ENCODE measurements at regions of chr1 and their contacts with region 1.

Region 1: DNA sequence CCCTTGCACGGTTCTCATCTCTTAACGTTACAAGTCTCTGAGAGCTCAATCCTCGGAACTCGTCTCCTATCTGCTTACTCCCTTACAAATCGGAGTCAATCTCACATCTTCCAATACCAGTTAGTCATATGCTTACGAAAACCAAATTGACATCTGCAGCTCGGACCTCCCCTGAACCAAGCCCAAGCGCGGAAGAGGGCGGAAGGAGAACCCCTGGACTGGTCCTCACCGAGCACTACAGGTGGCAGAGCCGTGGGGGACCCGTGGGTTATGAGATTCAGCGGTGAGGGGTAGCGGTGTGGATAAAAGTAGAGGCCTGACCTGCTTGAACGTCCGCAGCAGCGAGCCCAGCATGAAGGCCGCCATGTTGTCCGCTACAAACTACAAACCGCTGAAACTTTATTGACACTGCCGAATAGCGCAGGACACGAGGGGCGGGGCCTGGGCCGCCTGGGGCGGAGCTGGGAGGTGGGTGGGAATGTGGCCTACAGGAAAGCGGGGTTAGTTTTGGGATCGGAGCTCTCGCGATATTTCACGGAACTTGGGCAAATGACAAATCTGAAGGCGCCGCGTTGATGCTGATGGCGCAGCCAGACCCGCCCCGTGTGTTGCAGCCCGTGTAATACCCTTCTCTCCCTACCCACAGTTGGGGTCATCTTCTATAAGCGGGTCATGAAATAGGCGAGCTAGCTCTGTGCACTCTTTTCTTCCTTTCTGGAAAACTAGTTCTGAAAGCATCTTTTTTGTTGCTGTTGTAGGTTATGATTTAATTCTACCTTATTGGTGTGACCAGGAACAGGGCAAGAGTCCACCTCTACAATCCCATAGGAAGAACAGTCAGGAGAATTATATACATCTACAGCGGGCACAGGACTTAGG is at the start of gene MRPS14:
- DNase-seq: peak; percentile 99
- H3K4me3 Mint-ChIP-seq: peak within 1 kb of the TSS; percentile 87
- H3K27ac Mint-ChIP-seq: peak within 1 kb of the TSS; percentile 77
- H3K4me1 Mint-ChIP-seq: peaks cover 20% of the 10 kb centered on the region
- H3K27me3 Mint-ChIP-seq: no peaks in the 10 kb centered on the region
- CTCF ChIP-seq: no peak
- total RNA-seq, gene MRPS14: 36.3 and 40.6 TPM in 2 replicates

Region 2: DNA sequence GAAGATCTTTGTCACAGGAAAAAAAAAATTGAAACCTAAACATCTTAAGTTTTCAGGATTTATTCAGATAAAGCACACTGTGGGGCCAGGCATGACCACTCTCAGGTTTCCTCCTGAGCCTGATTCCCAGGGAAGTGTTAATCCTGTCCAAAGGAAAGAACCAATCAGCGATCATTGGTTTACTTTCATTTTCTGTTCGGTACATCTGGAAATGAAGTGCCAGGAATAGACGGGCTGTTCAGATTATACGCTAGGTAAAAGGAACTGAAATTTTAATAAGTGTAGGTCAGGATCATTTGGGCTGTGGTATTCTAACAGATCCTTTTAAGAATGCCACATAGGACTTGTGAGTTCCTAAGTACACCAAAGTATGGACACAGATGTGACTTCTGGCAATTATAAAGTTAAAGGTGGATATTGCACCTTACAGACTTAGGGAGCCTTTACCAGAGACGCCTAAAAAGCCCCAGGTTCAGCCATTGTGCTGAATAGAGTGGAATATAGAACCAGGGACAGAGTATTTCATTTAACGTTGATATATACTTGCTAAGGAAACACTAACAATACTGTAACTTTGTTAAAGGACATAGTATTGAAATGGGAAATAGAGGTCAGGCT is 32.8 kb before region 1 on chr1:
- CTCF ChIA-PET with region 1: no interaction called
- POLR2A ChIA-PET with region 1: interaction called, 13 read pairs
- intact Hi-C with region 1: no loop called
- DNase-seq: peak; percentile 91
- H3K4me3 Mint-ChIP-seq: peak overlapping the region; percentile 89
- H3K27ac Mint-ChIP-seq: peak overlapping the region; percentile 98
- H3K4me1 Mint-ChIP-seq: peaks cover 6% of the 10 kb centered on the region
- H3K27me3 Mint-ChIP-seq: no peaks in the 10 kb centered on the region
- CTCF ChIP-seq: no peak

Region 3: DNA sequence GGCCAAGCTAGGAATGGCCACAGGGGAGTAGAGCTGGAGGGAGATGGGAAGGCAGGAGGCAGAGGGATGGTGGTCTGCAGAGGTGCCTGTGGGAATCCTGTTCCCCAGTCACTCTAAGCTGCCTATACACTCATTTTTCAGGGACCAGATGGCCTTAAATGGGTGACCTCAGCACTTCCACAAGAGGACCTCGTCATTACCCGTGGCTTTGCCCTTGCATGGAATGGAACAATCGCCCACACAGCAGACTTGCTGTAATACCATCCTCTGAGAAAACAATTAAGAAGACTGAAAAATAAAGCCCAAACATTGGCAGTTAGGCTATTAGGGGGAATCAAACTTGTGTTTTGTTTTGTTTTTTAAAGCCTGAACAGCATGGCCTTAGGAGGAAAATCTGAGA is 31.5 kb after region 1 on chr1:
- CTCF ChIA-PET with region 1: interaction called, 24 read pairs
- POLR2A ChIA-PET with region 1: interaction called, 3 read pairs
- intact Hi-C with region 1: no loop called
- DNase-seq: no peak
- H3K4me3 Mint-ChIP-seq: no peak overlapping the region
- H3K27ac Mint-ChIP-seq: no peak overlapping the region
- H3K4me1 Mint-ChIP-seq: no peaks in the 10 kb centered on the region
- H3K27me3 Mint-ChIP-seq: peaks cover 24% of the 10 kb centered on the region
- CTCF ChIP-seq: no peak

Region 4: DNA sequence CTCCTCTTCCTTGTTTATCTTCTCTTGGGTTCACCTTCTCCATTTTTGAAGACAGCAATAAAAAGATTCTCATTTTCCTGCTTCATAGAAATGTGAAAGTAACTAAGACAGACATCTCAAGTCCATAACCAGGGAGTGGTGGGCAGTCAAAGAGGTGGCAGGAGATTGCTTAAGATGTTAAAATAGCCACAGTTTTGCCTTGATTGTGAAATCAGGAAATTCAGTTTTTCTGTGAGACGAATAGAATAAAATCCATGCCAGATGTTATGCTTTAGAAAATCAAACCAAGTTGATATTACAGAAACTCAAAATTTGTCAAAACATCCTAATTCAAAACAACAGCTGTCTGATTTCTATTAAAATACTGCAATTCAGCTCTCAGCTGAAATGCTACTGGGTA is 101.6 kb after region 1 on chr1:
- CTCF ChIA-PET with region 1: interaction called, 232 read pairs
- POLR2A ChIA-PET with region 1: interaction called, 9 read pairs
- intact Hi-C with region 1: no loop called
- DNase-seq: peak; percentile 36
- H3K4me3 Mint-ChIP-seq: no peak overlapping the region
- H3K27ac Mint-ChIP-seq: no peak overlapping the region
- H3K4me1 Mint-ChIP-seq: peaks cover 13% of the 10 kb centered on the region
- H3K27me3 Mint-ChIP-seq: no peaks in the 10 kb centered on the region
- CTCF ChIP-seq: no peak

Region 5: DNA sequence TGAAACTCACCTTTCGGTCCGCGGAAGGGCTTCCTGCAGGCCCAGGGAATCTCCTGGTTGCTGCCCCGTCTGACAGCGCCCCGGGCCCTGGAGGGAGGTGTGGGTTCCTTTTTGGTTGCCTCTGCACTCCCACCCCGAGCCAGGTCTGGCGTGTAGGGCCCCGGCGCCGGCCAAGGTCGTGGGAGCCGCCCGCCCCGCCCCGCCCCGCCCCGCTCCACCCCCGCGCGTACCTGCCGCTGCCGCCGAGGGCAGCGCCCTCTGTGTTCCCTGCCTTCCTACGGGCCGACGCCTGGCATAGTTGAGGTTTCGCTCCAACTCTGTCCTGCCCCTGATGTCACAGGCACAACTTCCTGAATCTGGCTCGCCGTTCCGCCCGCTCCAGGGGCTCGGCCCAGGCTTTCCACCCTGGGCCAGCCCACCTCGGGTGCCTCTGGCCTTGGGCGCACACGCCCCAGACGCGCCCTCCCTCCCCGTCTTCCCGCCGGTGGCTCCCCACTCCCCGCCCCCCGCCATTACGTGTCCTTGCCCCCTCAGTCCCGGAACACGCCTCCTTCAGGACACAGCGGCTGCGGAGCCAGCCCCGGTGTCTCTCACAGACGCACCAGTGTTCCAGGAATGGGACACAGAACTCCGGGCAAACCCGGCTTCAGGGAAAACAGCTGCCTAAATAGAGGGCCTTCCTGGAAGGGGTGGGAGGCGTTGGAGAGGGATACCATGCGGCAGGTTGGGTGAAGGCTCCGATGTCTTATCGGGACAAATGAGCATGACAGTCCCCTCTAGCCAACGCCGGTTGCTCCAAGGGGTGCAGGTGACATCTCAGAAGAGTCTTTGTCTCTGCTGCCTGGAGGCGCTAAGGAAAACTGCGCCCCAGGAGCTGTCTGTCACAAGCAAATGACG is 169.6 kb after region 1 on chr1 and contains the start of gene KIAA0040:
- CTCF ChIA-PET with region 1: interaction called, 5 read pairs
- POLR2A ChIA-PET with region 1: interaction called, 12 read pairs
- intact Hi-C with region 1: no loop called
- DNase-seq: peak; percentile 87
- H3K4me3 Mint-ChIP-seq: peak within 1 kb of the TSS; percentile 80
- H3K27ac Mint-ChIP-seq: peak within 1 kb of the TSS; percentile 67
- H3K4me1 Mint-ChIP-seq: peaks cover 43% of the 10 kb centered on the region
- H3K27me3 Mint-ChIP-seq: no peaks in the 10 kb centered on the region
- CTCF ChIP-seq: no peak
- total RNA-seq, gene KIAA0040: 26.7 and 27.7 TPM in 2 replicates

Region 6: DNA sequence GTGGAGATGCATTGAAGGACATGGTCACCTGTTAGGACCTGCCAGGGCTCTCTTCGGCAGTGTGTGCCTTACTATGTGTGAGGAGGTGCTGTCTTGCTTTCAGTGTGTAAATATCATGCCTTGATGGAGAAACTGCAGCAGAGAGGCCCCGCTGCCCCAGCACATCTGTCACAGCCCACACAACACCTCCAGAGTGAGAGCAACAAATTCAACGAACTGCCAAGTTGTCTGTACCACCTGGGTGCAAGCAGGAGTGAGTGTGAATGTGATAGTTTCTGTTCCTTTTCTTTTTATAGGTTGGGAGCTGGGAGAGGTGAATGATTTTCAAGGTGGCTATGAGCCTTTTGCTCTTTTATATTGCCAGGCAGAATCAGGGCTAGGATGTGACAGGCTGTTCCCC is 283.9 kb after region 1 on chr1:
- CTCF ChIA-PET with region 1: no interaction called
- POLR2A ChIA-PET with region 1: no interaction called
- intact Hi-C with region 1: no loop called
- DNase-seq: no peak
- H3K4me3 Mint-ChIP-seq: no peak overlapping the region
- H3K27ac Mint-ChIP-seq: no peak overlapping the region
- H3K4me1 Mint-ChIP-seq: peaks cover 5% of the 10 kb centered on the region
- H3K27me3 Mint-ChIP-seq: peaks cover 33% of the 10 kb centered on the region
- CTCF ChIP-seq: no peak